ENCODE measurements at regions of chr6 and their contacts with region 1.

Region 1: GRCh38 chr6:25359191-25359861 is 80.2 kb downstream of the CARMIL1 start:
- DNase-seq: peak; percentile 50
- ATAC-seq: peak; percentile 80
- H3K4me3 ChIP-seq: no peak overlapping the region
- H3K27ac ChIP-seq: peak overlapping the region; percentile 63; the same call in 1 of the 2 replicates
- H3K4me1 ChIP-seq: peaks cover 6% of the 10 kb centered on the region; the same call in 1 of the 2 replicates
- H3K27me3 ChIP-seq: no peaks in the 10 kb centered on the region
- CTCF ChIP-seq: no peak
- POLR2A ChIP-seq: no peak
- RAD21 ChIP-seq: no peak

Region 2: DNA sequence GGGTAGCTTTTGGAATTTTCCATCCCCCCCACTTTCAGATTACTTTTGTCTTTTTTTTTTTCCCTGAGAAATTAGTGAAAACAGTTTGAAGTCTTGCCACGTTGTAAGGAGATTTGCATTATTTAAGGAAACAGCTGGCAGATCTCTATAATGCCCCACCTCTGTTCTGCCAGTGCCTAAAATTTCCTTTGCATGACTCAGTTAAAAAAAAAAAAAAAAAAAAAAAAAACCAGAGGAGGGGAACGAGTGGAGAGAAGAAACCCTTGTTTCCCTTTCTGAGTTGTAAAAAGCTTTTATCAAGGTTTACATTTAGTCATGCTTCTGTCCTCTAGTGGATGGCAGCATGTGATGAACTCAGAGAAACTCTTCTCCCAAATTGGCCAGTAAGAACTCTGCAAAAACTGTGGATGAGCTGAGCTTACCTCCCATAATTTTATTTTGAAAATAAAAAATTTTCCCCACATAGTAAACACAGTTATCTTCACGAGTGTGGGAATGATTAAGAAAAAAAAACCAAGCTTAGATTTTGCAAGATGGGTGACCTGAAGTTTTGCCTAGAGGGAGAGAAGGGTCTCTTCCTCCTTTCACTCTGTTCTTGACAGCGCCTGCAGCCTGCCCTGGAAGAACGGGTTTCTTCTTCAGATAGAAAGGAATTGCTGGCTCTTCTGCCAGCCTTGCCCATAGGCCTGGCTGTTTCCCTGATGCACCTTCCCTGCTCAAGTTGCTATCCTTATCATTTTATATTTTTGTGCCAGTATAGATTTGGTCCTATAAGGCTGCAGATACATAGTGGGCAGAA is 46.4 kb before region 1 on chr6:
- CTCF ChIA-PET with region 1: interaction called, 3 read pairs
- POLR2A ChIA-PET with region 1: no interaction called
- dilution Hi-C with region 1: no loop called
- in situ Hi-C with region 1: no loop called
- intact Hi-C with region 1: loop called (anchors 2 kb)
- DNase-seq: peak; percentile 59
- ATAC-seq: peak; percentile 86
- H3K4me3 ChIP-seq: no peak overlapping the region
- H3K27ac ChIP-seq: peak overlapping the region; percentile 87; the same call in 1 of the 2 replicates
- H3K4me1 ChIP-seq: peaks cover 9% of the 10 kb centered on the region
- H3K27me3 ChIP-seq: no peaks in the 10 kb centered on the region
- CTCF ChIP-seq: no peak; the same call in 1 of the 2 replicates
- POLR2A ChIP-seq: no peak
- RAD21 ChIP-seq: no peak

Measured in IMR-90 (cell line).